ENCODE measurements at regions of chr1 and their contacts with region 1.

Region 1: DNA sequence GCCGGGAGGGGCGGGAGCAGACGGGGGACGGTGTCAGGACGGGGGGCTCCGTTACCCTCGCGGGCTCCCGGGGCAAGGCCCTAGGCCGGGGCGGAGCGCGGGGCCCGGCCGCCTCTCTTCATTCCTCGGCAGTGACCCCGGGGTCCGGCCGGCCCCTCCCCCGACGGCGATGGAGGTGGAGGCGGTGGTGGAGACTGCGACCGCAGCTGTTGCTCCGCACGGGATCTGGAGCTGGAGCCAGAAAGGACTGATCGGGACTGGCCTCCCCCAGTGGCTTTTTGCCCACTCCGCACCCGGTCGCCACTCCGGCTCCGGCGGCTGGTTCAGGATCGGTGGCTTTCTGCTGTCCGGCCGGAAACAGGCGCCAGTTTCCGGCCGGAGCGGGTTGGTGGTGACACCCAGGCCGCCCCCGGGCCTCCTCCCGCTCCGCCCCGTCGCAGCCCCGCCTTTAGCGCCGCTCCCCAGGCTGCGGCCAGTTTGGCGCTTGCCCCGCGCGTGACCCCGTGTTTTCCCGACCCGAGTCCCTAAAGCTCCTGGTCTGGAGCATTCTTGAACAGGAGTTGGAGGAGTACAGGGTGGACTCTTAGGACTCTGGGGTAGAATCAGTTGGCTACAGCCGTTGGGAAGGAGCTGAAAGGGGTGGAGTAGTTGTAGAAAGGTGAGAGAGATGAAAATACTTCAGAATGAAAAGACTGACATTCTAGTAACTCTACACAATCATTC is at the start of gene OTUD7B:
- DNase-seq: peak; percentile 89 to 93 (median 90)
- ATAC-seq: peak; percentile 85 to 97 (median 96)
- H3K4me3 ChIP-seq: peak within 1 kb of the TSS; percentile 62 to 97 (median 89)
- H3K27ac ChIP-seq: peak within 1 kb of the TSS; percentile 75 to 98 (median 93)
- H3K4me1 ChIP-seq: peaks cover 2 to 43% (median 27%) of the 10 kb centered on the region in 12 donors
- H3K27me3 ChIP-seq: peaks cover 0 to 64% (median 0%) of the 10 kb centered on the region in 9 donors
- CTCF ChIP-seq: peak in 1 of 12 donors; percentile 10
- POLR2A ChIP-seq: peak in 1 of 2 donors; percentile 84
- total RNA-seq, gene OTUD7B: 16.4 to 36.2 (median 28.0) TPM

Region 2: DNA sequence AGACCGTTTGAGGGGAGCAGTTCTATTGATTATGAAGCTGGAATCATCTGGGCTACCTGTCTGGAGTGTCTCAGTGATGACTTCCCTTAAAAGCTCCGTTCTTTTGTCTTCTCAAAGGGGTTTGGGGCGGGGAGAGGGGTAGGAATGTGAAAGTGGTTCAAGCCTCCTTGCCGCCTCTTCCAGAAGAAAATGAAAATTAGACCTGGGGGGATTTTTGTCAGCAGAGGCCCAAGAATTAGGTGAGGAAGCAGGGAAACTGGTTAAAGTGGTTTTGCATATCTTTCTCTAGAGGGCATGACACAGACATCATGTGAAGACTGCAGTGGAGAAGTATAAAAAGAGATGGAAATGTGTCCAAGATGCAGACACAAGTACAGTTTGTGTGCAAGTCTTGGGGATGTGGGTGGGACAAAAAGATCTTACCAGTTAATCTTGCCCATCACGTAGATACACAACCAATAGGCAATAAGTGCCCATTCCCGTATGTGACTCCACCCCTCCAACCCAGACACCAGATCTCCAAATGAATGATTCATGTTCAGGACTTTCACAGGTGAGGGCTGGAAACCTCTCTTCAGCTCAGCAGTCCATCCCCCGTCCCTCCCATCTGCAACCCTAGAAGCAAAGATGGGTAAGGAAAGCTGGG is 73.4 kb before region 1 on chr1:
- intact Hi-C with region 1: no loop called
- DNase-seq: no peak
- ATAC-seq: no peak
- H3K4me3 ChIP-seq: peak overlapping the region; percentile 22 to 73 (median 55)
- H3K27ac ChIP-seq: peak overlapping the region in 9 of 12 donors; percentile 10 to 88 (median 59)
- H3K4me1 ChIP-seq: peaks cover 0 to 45% (median 35%) of the 10 kb centered on the region in 12 donors
- H3K27me3 ChIP-seq: no peaks in the 10 kb centered on the region
- CTCF ChIP-seq: no peak
- POLR2A ChIP-seq: no peak

Region 3: GRCh38 chr1:150053926-150054325 is 43.4 kb after region 1 on chr1:
- intact Hi-C with region 1: loop called in 3 of 10 experiments (anchors 5 kb)
- DNase-seq: no peak
- ATAC-seq: no peak
- H3K4me3 ChIP-seq: no peak overlapping the region
- H3K27ac ChIP-seq: no peak overlapping the region
- H3K4me1 ChIP-seq: peaks cover 0 to 20% (median 0%) of the 10 kb centered on the region in 12 donors
- H3K27me3 ChIP-seq: no peaks in the 10 kb centered on the region
- CTCF ChIP-seq: no peak
- POLR2A ChIP-seq: no peak

Region 4: DNA sequence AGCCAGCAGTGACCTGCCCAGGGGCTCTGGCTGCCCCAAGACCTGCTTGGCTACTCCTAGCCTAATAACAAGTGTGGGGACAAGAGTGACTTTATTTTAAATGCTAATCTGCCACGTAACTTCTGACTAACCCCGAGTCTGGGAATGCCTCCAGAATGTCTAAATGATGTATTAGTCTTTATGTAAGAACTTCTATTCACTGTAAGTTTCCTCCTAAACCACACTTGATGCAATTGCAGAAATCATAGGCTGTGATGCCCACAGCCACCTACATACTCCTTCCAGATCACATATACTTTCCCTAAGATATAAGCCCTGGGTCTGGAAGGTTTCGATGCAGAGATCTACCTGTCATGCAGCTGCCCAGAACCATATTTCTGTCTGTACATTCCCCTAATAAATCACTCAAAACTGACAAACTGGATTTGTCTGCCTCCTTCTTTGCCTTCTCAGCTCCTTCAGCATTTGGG is 51.1 kb after region 1 on chr1:
- intact Hi-C with region 1: loop called in 5 of 10 experiments (anchors 2 to 10 kb)
- DNase-seq: no peak
- ATAC-seq: peak in 2 of 4 donors; percentile 32 to 52
- H3K4me3 ChIP-seq: no peak overlapping the region
- H3K27ac ChIP-seq: peak overlapping the region in 2 of 12 donors; percentile 18 to 64
- H3K4me1 ChIP-seq: peaks cover 0 to 31% (median 15%) of the 10 kb centered on the region in 12 donors
- H3K27me3 ChIP-seq: no peaks in the 10 kb centered on the region
- CTCF ChIP-seq: no peak
- POLR2A ChIP-seq: no peak

Region 5: DNA sequence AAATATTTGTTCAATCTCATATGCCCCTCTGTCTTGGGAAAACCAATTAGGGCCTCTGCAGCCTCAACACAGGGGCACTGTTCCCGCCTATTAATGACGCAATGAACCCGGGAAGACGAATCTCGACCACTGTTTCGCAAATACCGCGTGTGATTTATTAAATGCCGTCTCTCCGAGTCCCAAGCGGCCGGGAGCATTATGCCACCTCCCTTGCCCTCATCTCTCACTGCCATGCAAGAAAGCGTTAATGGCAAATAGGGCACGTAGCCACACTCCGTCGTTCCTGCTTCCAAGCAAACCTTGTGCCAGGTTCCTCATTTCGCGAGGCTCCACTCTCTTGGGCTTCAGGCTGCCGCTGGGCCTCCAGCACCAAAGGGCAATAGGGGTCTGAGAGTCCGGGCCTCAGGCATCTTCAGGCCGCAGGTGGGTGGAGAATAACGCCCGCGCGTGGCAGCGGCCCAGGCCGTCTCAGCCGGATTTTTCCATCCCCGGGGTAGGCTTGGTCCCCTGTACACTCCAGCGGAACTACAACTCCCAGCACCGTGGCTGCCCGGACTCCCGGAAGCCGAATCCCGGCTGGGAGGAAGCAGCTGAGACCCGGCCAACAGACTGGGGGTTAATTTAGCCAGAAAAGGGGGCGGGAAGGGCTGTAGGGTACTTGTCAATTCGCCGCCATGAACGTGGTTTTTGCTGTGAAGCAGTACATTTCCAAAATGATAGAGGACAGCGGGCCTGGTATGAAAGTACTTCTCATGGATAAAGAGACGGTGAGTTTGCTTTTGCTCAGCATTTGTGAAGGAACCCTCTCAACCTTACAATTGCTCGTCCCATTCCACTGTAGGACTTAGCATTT is 56.9 kb after region 1 on chr1 and contains the start of gene VPS45:
- intact Hi-C with region 1: loop called in 5 of 10 experiments (anchors 2 to 10 kb)
- DNase-seq: peak; percentile 92 to 96 (median 93)
- ATAC-seq: peak; percentile 97 to 99 (median 98)
- H3K4me3 ChIP-seq: peak within 1 kb of the TSS; percentile 37 to 92 (median 78)
- H3K27ac ChIP-seq: peak within 1 kb of the TSS; percentile 80 to 98 (median 92)
- H3K4me1 ChIP-seq: peaks cover 0 to 49% (median 22%) of the 10 kb centered on the region in 12 donors
- H3K27me3 ChIP-seq: no peaks in the 10 kb centered on the region
- CTCF ChIP-seq: peak in 5 of 12 donors; percentile 5 to 45 (median 9)
- POLR2A ChIP-seq: peak in 1 of 2 donors; percentile 43
- total RNA-seq, gene VPS45: 39.1 to 67.7 (median 49.5) TPM

Measured in heart left ventricle (tissue), 16 donors.